ENCODE measurements at regions of chr1 and their contacts with region 1.

Region 1: DNA sequence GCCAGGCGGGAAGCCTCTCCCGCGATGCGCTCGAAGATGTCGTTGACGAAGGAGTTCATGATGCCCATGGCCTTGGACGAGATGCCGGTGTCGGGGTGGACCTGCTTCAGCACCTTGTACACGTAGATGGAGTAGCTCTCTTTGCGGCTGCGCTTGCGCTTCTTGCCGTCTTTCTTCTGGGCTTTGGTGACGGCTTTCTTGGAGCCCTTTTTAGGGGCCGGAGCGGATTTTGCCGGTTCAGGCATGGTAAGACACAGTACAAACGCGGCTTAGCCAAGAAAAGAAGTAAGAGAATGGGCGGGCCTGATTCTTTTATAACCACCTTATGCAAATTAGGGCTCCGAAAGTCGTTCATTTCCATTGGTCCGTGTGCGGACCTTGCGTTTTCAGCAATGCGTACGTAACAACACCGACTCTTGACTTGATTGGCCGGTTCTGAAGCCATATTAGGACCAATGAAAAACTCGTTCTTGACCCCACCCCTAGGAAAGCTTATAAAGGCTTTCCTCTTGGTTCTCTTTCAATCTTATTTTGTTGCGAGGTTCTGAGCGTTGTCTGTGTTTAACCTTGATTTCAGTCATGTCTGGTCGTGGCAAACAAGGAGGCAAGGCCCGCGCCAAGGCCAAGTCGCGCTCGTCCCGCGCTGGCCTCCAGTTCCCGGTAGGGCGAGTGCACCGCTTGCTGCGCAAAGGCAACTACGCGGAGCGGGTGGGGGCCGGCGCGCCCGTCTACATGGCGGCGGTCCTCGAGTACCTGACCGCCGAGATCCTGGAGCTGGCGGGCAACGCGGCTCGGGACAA is 12.8 kb upstream of the BOLA1 start:
- DNase-seq: peak; percentile 82 to 97
- H3K4me3 ChIP-seq: peak overlapping the region; percentile 79
- H3K27ac ChIP-seq: peak overlapping the region; percentile 97
- H3K4me1 ChIP-seq: peaks cover 27% of the 10 kb centered on the region
- H3K27me3 ChIP-seq: no peaks in the 10 kb centered on the region
- CTCF ChIP-seq: no peak

Region 2: GRCh38 chr1:149849947-149850360 is 36.6 kb before region 1 on chr1:
- CTCF ChIA-PET with region 1: no interaction called
- POLR2A ChIA-PET with region 1: interaction called, 10 read pairs
- intact Hi-C with region 1: no loop called
- DNase-seq: no peak
- H3K4me3 ChIP-seq: peak overlapping the region; percentile 94
- H3K27ac ChIP-seq: peak overlapping the region; percentile 61
- H3K4me1 ChIP-seq: peaks cover 42% of the 10 kb centered on the region
- H3K27me3 ChIP-seq: no peaks in the 10 kb centered on the region
- CTCF ChIP-seq: no peak

Region 3: DNA sequence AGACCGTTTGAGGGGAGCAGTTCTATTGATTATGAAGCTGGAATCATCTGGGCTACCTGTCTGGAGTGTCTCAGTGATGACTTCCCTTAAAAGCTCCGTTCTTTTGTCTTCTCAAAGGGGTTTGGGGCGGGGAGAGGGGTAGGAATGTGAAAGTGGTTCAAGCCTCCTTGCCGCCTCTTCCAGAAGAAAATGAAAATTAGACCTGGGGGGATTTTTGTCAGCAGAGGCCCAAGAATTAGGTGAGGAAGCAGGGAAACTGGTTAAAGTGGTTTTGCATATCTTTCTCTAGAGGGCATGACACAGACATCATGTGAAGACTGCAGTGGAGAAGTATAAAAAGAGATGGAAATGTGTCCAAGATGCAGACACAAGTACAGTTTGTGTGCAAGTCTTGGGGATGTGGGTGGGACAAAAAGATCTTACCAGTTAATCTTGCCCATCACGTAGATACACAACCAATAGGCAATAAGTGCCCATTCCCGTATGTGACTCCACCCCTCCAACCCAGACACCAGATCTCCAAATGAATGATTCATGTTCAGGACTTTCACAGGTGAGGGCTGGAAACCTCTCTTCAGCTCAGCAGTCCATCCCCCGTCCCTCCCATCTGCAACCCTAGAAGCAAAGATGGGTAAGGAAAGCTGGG is 50.6 kb after region 1 on chr1:
- CTCF ChIA-PET with region 1: interaction called, 3 read pairs
- POLR2A ChIA-PET with region 1: interaction called, 33 read pairs
- intact Hi-C with region 1: loop called (anchors 1 kb)
- DNase-seq: peak; percentile 80 to 92
- H3K4me3 ChIP-seq: peak overlapping the region; percentile 81
- H3K27ac ChIP-seq: peak overlapping the region; percentile 95
- H3K4me1 ChIP-seq: peaks cover 40% of the 10 kb centered on the region
- H3K27me3 ChIP-seq: no peaks in the 10 kb centered on the region
- CTCF ChIP-seq: 0 out of 2 replicates have a peak, but pooled peaks have one; percentile 16

Region 4: DNA sequence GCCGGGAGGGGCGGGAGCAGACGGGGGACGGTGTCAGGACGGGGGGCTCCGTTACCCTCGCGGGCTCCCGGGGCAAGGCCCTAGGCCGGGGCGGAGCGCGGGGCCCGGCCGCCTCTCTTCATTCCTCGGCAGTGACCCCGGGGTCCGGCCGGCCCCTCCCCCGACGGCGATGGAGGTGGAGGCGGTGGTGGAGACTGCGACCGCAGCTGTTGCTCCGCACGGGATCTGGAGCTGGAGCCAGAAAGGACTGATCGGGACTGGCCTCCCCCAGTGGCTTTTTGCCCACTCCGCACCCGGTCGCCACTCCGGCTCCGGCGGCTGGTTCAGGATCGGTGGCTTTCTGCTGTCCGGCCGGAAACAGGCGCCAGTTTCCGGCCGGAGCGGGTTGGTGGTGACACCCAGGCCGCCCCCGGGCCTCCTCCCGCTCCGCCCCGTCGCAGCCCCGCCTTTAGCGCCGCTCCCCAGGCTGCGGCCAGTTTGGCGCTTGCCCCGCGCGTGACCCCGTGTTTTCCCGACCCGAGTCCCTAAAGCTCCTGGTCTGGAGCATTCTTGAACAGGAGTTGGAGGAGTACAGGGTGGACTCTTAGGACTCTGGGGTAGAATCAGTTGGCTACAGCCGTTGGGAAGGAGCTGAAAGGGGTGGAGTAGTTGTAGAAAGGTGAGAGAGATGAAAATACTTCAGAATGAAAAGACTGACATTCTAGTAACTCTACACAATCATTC is 124.0 kb after region 1 on chr1 and contains the start of gene OTUD7B:
- CTCF ChIA-PET with region 1: no interaction called
- POLR2A ChIA-PET with region 1: interaction called, 11 read pairs
- intact Hi-C with region 1: no loop called
- DNase-seq: peak; percentile 74 to 87
- H3K4me3 ChIP-seq: peak within 1 kb of the TSS; percentile 98
- H3K27ac ChIP-seq: peak within 1 kb of the TSS; percentile 91
- H3K4me1 ChIP-seq: peaks cover 66% of the 10 kb centered on the region
- H3K27me3 ChIP-seq: no peaks in the 10 kb centered on the region
- CTCF ChIP-seq: no peak
- total RNA-seq, gene OTUD7B: 30.2 and 30.7 TPM in 2 replicates

Region 5: GRCh38 chr1:150162862-150163706 is 276.5 kb after region 1 on chr1:
- CTCF ChIA-PET with region 1: no interaction called
- POLR2A ChIA-PET with region 1: interaction called, 3 read pairs
- intact Hi-C with region 1: loop called (anchors 10 kb)
- DNase-seq: no peak
- H3K4me3 ChIP-seq: no peak overlapping the region
- H3K27ac ChIP-seq: no peak overlapping the region
- H3K4me1 ChIP-seq: no peaks in the 10 kb centered on the region
- H3K27me3 ChIP-seq: no peaks in the 10 kb centered on the region
- CTCF ChIP-seq: no peak

Region 6: DNA sequence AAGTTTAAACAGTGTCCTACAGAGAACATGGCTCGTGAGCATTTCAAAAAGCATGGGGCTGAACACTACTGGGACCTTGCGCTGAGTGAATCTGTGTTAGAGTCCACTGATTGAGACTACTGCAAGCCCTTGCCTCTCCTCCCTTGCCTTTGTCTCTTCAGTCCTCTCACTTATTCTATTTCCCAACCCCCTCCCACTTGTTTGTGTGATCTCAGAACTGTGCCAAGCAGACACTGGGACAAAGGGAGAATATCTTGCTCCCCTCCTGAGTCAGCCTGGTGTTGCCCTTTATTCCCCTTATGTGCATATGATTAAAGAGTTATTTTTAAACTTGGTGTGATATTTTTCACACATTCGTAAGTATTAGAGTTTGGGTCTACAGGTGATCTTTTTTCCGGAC is 466.3 kb after region 1 on chr1:
- CTCF ChIA-PET with region 1: no interaction called
- POLR2A ChIA-PET with region 1: no interaction called
- intact Hi-C with region 1: no loop called
- DNase-seq: no peak
- H3K4me3 ChIP-seq: no peak overlapping the region
- H3K27ac ChIP-seq: no peak overlapping the region
- H3K4me1 ChIP-seq: no peaks in the 10 kb centered on the region
- H3K27me3 ChIP-seq: no peaks in the 10 kb centered on the region
- CTCF ChIP-seq: no peak

Measured in PC-9 (cell line).